Mammary epithelial cell (primary cell): ENCODE measurements at regions of chr19 and their contacts with region 1.

Region 1: GRCh38 chr19:3984908-3985642 is at the start of gene EEF2:
- DNase-seq: peak; percentile 79
- H3K4me3 ChIP-seq: peak within 1 kb of the TSS; percentile 77 to 95 (median 82)
- H3K27ac ChIP-seq: peak within 1 kb of the TSS; percentile 85
- H3K4me1 ChIP-seq: peaks cover 55% of the 10 kb centered on the region
- H3K27me3 ChIP-seq: no peaks in the 10 kb centered on the region
- CTCF ChIP-seq: no peak
- total RNA-seq, gene EEF2: 2,299 to 2,969 TPM

Region 2: GRCh38 chr19:3687774-3688706 is 297.0 kb before region 1 on chr19:
- CTCF ChIA-PET with region 1: interaction called, 25 read pairs
- dilution Hi-C with region 1: no loop called
- in situ Hi-C with region 1: no loop called
- intact Hi-C with region 1: no loop called
- DNase-seq: peak; percentile 43
- H3K4me3 ChIP-seq: peak overlapping the region in 2 of 3 experiments; percentile 1 to 5
- H3K27ac ChIP-seq: no peak overlapping the region
- H3K4me1 ChIP-seq: peaks cover 10% of the 10 kb centered on the region
- H3K27me3 ChIP-seq: no peaks in the 10 kb centered on the region
- CTCF ChIP-seq: no peak

Region 3: DNA sequence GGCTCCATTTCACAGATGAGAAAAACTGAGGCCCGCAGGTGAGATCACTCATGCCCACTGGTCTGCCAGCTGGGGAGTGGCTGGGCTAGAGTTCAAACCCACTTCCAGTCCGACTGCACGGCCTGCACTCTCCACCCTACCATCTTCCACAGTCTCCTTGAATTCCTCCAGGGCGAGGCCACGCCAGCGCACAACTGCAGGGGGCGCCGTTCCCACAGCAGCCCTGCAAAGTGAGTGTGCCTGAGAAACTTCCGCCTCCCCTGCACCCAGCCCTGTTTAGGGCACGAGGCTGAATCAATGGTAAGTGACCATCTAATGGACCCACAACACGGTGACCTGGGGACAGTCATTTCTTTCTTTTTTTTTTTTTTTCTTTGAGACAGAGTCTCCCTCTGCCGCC is 105.4 kb before region 1 on chr19:
- CTCF ChIA-PET with region 1: no interaction called
- dilution Hi-C with region 1: loop called (anchors 5 kb)
- in situ Hi-C with region 1: no loop called
- intact Hi-C with region 1: no loop called
- DNase-seq: no peak
- H3K4me3 ChIP-seq: no peak overlapping the region
- H3K27ac ChIP-seq: no peak overlapping the region
- H3K4me1 ChIP-seq: no peaks in the 10 kb centered on the region
- H3K27me3 ChIP-seq: peaks cover 23% of the 10 kb centered on the region
- CTCF ChIP-seq: peak in 1 of 2 donors; percentile 4

Region 4: GRCh38 chr19:3970808-3971598 is 14.1 kb before region 1 on chr19 and contains the start of gene DAPK3:
- CTCF ChIA-PET with region 1: interaction called, 31 read pairs
- dilution Hi-C with region 1: no loop called
- in situ Hi-C with region 1: no loop called
- intact Hi-C with region 1: loop called (anchors 2 kb)
- DNase-seq: peak; percentile 99
- H3K4me3 ChIP-seq: peak within 1 kb of the TSS; percentile 92 to 97 (median 96)
- H3K27ac ChIP-seq: peak within 1 kb of the TSS; percentile 88
- H3K4me1 ChIP-seq: peaks cover 24% of the 10 kb centered on the region
- H3K27me3 ChIP-seq: no peaks in the 10 kb centered on the region
- CTCF ChIP-seq: no peak
- total RNA-seq, gene DAPK3: 69.2 to 99.9 TPM

Region 5: GRCh38 chr19:4065430-4066175 is 80.5 kb after region 1 on chr19:
- CTCF ChIA-PET with region 1: no interaction called
- dilution Hi-C with region 1: loop called (anchors 5 kb)
- in situ Hi-C with region 1: no loop called
- intact Hi-C with region 1: loop called (anchors 2 kb)
- DNase-seq: peak; percentile 92
- H3K4me3 ChIP-seq: peak overlapping the region; percentile 88 to 92 (median 92)
- H3K27ac ChIP-seq: no peak overlapping the region
- H3K4me1 ChIP-seq: peaks cover 31% of the 10 kb centered on the region
- H3K27me3 ChIP-seq: no peaks in the 10 kb centered on the region
- CTCF ChIP-seq: no peak

Region 6: GRCh38 chr19:4182084-4182810 is 197.2 kb after region 1 on chr19 and contains the starts of genes ANKRD24 and SIRT6:
- CTCF ChIA-PET with region 1: interaction called, 20 read pairs
- dilution Hi-C with region 1: no loop called
- in situ Hi-C with region 1: no loop called
- intact Hi-C with region 1: loop called (anchors 2 kb)
- DNase-seq: peak; percentile 91
- H3K4me3 ChIP-seq: peak within 1 kb of the TSS; percentile 91 to 94 (median 93)
- H3K27ac ChIP-seq: peak within 1 kb of the TSS; percentile 45
- H3K4me1 ChIP-seq: peaks cover 13% of the 10 kb centered on the region
- H3K27me3 ChIP-seq: no peaks in the 10 kb centered on the region
- CTCF ChIP-seq: no peak
- total RNA-seq, gene ANKRD24: 0.67 to 0.73 TPM
- total RNA-seq, gene SIRT6: 8.7 to 28.8 TPM

Region 7: GRCh38 chr19:4342615-4343369 is 357.7 kb after region 1 on chr19:
- CTCF ChIA-PET with region 1: interaction called, 28 read pairs
- dilution Hi-C with region 1: no loop called
- in situ Hi-C with region 1: no loop called
- intact Hi-C with region 1: no loop called
- DNase-seq: peak; percentile 100
- H3K4me3 ChIP-seq: peak overlapping the region; percentile 53 to 70 (median 62)
- H3K27ac ChIP-seq: peak overlapping the region; percentile 48
- H3K4me1 ChIP-seq: peaks cover 19% of the 10 kb centered on the region
- H3K27me3 ChIP-seq: no peaks in the 10 kb centered on the region
- CTCF ChIP-seq: peak in 1 of 2 donors; percentile 38